Vagina (tissue), 2 donors: ENCODE measurements at regions of chr7 and their contacts with region 1.

Region 1: GRCh38 chr7:96303686-96304443 is 18.0 kb downstream of the SLC25A13 start:
- DNase-seq: no peak
- H3K4me3 ChIP-seq: no peak overlapping the region
- H3K27ac ChIP-seq: no peak overlapping the region
- H3K4me1 ChIP-seq: peaks cover 45% of the 10 kb centered on the region
- H3K27me3 ChIP-seq: no peaks in the 10 kb centered on the region
- CTCF ChIP-seq: no peak
- POLR2A ChIP-seq: no peak

Region 2: GRCh38 chr7:96236198-96237039 is 67.4 kb before region 1 on chr7:
- intact Hi-C with region 1: loop called (anchors 10 kb)
- DNase-seq: peak in 1 of 2 donors; percentile 90
- H3K4me3 ChIP-seq: no peak overlapping the region
- H3K27ac ChIP-seq: no peak overlapping the region
- H3K4me1 ChIP-seq: peaks cover 27% of the 10 kb centered on the region
- H3K27me3 ChIP-seq: no peaks in the 10 kb centered on the region
- CTCF ChIP-seq: no peak
- POLR2A ChIP-seq: no peak